IMR-90 (cell line): ENCODE measurements at regions of chr12 and their contacts with region 1.

Region 1: GRCh38 chr12:50174971-50175715 is 8.0 kb upstream of the CERS5 start:
- DNase-seq: peak; percentile 85
- ATAC-seq: peak; percentile 44; the same call in 1 of the 2 replicates
- H3K4me3 ChIP-seq: no peak overlapping the region
- H3K27ac ChIP-seq: peak overlapping the region; percentile 27; the same call in 1 of the 2 replicates
- H3K4me1 ChIP-seq: 0 out of 2 replicates have a peak, but pooled peaks cover 2% of the 10 kb centered on the region
- H3K27me3 ChIP-seq: no peaks in the 10 kb centered on the region
- CTCF ChIP-seq: peak; percentile 72
- POLR2A ChIP-seq: no peak
- RAD21 ChIP-seq: peak; percentile 74

Region 2: DNA sequence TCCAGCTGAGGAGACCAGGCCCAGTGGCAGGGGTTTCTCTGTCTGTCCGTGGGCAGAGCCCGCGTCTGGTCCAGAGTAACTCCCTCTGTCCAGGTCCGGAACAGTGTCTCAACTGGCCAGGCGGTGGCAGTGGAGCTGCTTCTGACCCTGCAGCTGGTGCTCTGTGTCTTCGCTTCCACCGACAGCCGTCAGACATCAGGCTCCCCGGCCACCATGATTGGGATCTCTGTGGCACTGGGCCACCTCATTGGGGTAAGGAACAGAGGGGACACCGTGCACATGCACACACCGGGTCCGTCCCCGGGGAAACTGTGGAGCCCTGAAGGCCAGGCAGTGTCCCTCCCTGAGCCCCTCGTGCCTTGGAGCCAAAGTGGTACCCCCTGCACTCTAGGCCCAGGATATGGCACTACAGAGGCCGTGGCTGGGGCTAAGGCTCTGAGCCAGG is 200.9 kb before region 1 on chr12:
- CTCF ChIA-PET with region 1: no interaction called
- POLR2A ChIA-PET with region 1: no interaction called
- dilution Hi-C with region 1: no loop called
- in situ Hi-C with region 1: loop called (anchors 10 kb)
- intact Hi-C with region 1: loop called (anchors 10 kb)
- DNase-seq: peak; percentile 64
- ATAC-seq: peak; percentile 98
- H3K4me3 ChIP-seq: no peak overlapping the region
- H3K27ac ChIP-seq: no peak overlapping the region
- H3K4me1 ChIP-seq: no peaks in the 10 kb centered on the region
- H3K27me3 ChIP-seq: peaks cover 33% of the 10 kb centered on the region
- CTCF ChIP-seq: peak; percentile 73
- POLR2A ChIP-seq: no peak
- RAD21 ChIP-seq: peak; percentile 75

Region 3: GRCh38 chr12:50074936-50075807 is 100.0 kb before region 1 on chr12:
- CTCF ChIA-PET with region 1: no interaction called
- POLR2A ChIA-PET with region 1: no interaction called
- dilution Hi-C with region 1: no loop called
- in situ Hi-C with region 1: no loop called
- intact Hi-C with region 1: loop called (anchors 1 kb)
- DNase-seq: peak; percentile 76
- ATAC-seq: peak; percentile 98
- H3K4me3 ChIP-seq: no peak overlapping the region
- H3K27ac ChIP-seq: no peak overlapping the region
- H3K4me1 ChIP-seq: peaks cover 3% of the 10 kb centered on the region; the same call in 1 of the 2 replicates
- H3K27me3 ChIP-seq: no peaks in the 10 kb centered on the region
- CTCF ChIP-seq: peak; percentile 94
- POLR2A ChIP-seq: no peak
- RAD21 ChIP-seq: peak; percentile 95

Region 4: DNA sequence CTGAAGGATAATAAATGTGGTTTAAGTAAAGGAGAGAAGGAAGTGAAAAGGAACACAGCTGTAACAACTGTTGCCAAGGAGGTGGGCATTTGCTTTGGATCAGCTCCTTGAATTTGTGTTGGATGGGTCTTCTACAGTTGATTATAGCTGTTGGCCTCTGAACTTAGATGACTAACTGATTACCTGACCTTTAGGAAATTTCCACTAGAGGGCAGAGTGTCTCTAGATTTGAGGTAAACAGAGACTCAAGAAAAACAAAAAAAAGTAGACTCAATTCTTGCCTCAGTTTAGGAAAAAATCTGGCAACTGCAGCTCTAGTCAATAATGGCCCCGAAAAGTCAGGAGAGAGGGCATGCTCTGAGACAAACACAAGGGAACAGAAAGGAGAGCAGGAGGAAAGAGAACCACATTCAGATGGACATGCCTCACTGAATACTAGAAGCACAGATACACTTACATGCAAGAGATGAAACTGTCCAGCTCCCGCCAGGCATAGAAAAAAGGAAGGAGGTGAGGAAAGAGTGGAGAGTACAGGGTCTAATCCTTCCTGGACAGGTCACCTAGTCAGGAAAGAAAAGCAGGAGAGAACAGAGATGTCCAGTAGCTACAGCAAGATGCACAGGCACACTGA is 42.5 kb before region 1 on chr12:
- CTCF ChIA-PET with region 1: interaction called, 5 read pairs
- POLR2A ChIA-PET with region 1: no interaction called
- dilution Hi-C with region 1: no loop called
- in situ Hi-C with region 1: no loop called
- intact Hi-C with region 1: loop called (anchors 1 kb)
- DNase-seq: peak; percentile 61
- ATAC-seq: peak; percentile 62
- H3K4me3 ChIP-seq: no peak overlapping the region
- H3K27ac ChIP-seq: peak overlapping the region; percentile 3; the same call in 1 of the 2 replicates
- H3K4me1 ChIP-seq: peaks cover 3% of the 10 kb centered on the region
- H3K27me3 ChIP-seq: no peaks in the 10 kb centered on the region
- CTCF ChIP-seq: peak; percentile 66
- POLR2A ChIP-seq: no peak
- RAD21 ChIP-seq: peak; percentile 55